OCI-LY7 (cell line): ENCODE measurements at regions of chr2 and their contacts with region 1.

Region 1: DNA sequence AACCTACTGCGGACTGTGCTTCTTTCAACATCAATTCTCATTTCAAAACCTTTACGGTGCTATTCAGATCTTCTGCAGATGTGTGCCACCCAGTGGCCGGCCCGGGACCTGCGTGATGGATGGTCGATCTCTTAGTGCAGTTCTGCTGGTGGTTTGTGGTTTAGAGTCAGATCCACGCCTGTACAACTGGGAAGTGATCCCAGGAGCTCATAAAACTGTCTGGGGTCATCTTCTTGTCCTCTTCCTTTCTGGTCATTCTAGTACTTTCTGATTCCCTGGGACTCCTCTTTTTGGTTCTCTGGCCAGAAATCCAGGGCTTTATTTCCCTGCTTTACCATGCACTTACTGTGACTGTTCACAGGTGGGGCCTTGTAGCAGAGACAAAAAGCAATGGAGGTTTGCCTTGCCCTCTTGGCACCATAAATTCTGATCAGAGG is 15.8 kb upstream of the SELENOI start:
- DNase-seq: peak; percentile 78
- H3K4me3 ChIP-seq: no peak overlapping the region
- H3K27ac ChIP-seq: no peak overlapping the region
- H3K4me1 ChIP-seq: peaks cover 32% of the 10 kb centered on the region
- CTCF ChIP-seq: peak; percentile 96

Region 2: GRCh38 chr2:26235085-26235484 is 95.0 kb before region 1 on chr2:
- CTCF ChIA-PET with region 1: no interaction called
- POLR2A ChIA-PET with region 1: no interaction called
- intact Hi-C with region 1: loop called (anchors 5 kb)
- DNase-seq: no peak
- H3K4me3 ChIP-seq: no peak overlapping the region
- H3K27ac ChIP-seq: no peak overlapping the region
- H3K4me1 ChIP-seq: no peaks in the 10 kb centered on the region
- CTCF ChIP-seq: peak; percentile 45; the same call in 1 of the 2 replicates

Region 3: GRCh38 chr2:26469092-26469710 is 139.1 kb after region 1 on chr2:
- CTCF ChIA-PET with region 1: no interaction called
- POLR2A ChIA-PET with region 1: no interaction called
- intact Hi-C with region 1: loop called (anchors 10 kb)
- DNase-seq: peak; percentile 66
- H3K4me3 ChIP-seq: no peak overlapping the region
- H3K27ac ChIP-seq: no peak overlapping the region
- H3K4me1 ChIP-seq: no peaks in the 10 kb centered on the region
- CTCF ChIP-seq: peak; percentile 90